CD4-positive, alpha-beta memory T cell (primary cell): ENCODE measurements at regions of chr3 and their contacts with region 1.

Region 1: DNA sequence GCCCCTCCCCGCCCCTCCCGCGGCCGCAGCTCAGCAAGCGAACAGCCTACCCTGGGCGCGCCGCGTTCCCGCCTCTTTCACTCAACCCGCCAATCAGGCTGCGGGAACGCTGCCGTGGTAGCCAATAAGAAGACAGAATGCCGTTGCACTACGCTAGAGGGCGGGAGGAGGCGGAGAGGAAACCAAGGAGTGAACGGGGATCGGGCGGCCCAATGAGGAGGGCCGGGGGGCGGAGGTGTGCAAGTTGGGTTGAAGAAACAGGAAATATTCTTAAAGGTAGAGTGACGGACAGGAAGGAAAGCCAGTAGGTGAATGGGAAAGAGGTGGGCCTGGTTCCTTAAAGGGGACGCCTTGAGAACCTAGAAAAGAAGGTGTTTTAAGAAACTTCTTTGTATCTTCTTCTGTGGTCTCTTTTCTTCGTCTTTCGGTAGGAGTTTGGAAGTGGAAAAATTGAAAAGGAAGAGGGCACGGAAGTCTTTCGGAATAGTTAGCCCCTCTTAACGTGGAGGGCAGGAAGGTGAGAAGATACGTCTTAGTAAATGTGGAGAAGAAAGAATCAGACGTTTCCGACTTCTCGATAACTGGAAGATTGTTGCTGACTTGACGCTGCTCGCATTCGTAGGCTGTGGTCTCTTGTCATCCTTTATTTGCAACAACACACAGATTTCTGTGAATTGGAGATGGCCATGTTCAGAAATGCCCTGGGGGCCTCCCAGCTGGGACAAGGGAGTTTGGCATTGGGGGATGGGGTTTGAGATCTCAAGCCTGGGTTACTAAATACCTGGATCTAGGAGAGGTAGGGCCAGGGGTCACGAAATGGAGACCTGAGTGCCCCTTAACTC is 437 bp upstream of the USF3 start:
- DNase-seq: peak; percentile 99 to 100 (median 100)
- H3K4me3 ChIP-seq: peak overlapping the region; percentile 74 to 90
- H3K4me3 Mint-ChIP-seq: no peak overlapping the region
- H3K27ac ChIP-seq: peak overlapping the region; percentile 86
- H3K27ac Mint-ChIP-seq: no peak overlapping the region
- H3K4me1 ChIP-seq: peaks cover 46% of the 10 kb centered on the region
- H3K4me1 Mint-ChIP-seq: peaks cover 20 to 33% (median 25%) of the 10 kb centered on the region in 4 donors
- H3K27me3 ChIP-seq: no peaks in the 10 kb centered on the region
- H3K27me3 Mint-ChIP-seq: no peaks in the 10 kb centered on the region

Region 2: GRCh38 chr3:113531826-113532697 is 164.8 kb before region 1 on chr3 and contains the start of gene SIDT1:
- CTCF ChIA-PET with region 1: no interaction called
- POLR2A ChIA-PET with region 1: no interaction called
- intact Hi-C with region 1: loop called (anchors 2 kb)
- DNase-seq: peak; percentile 77 to 84 (median 80)
- H3K4me3 ChIP-seq: peak within 1 kb of the TSS; percentile 79 to 96
- H3K4me3 Mint-ChIP-seq: peak within 1 kb of the TSS; percentile 97 to 100 (median 99)
- H3K27ac ChIP-seq: peak within 1 kb of the TSS; percentile 90
- H3K27ac Mint-ChIP-seq: peak within 1 kb of the TSS; percentile 95 to 100 (median 100)
- H3K4me1 ChIP-seq: peaks cover 45% of the 10 kb centered on the region
- H3K4me1 Mint-ChIP-seq: peaks cover 36 to 55% (median 45%) of the 10 kb centered on the region in 4 donors
- H3K27me3 ChIP-seq: no peaks in the 10 kb centered on the region
- H3K27me3 Mint-ChIP-seq: no peaks in the 10 kb centered on the region
- total RNA-seq, gene SIDT1: 55.0 to 56.1 TPM

Region 3: DNA sequence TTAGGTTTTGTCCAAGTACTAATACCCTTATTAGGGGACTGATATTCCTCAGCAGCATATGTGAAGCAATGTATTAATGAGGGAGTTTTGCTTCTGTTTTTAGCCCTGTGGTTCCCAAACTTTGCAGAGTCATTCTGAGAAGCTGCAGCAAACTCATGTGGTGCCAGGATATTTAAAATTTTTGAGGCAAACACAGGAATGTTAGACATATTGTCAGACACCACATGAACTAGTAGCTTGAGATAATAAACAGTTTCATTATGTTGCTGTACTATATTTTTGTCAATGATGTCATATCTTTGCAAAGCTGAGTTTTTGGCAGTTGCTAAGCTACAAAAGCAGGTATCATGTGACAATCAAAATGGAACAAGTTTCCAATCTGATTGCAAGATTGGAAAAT is 86.6 kb after region 1 on chr3:
- CTCF ChIA-PET with region 1: no interaction called
- POLR2A ChIA-PET with region 1: no interaction called
- intact Hi-C with region 1: no loop called
- DNase-seq: no peak
- H3K4me3 ChIP-seq: no peak overlapping the region
- H3K4me3 Mint-ChIP-seq: no peak overlapping the region
- H3K27ac ChIP-seq: no peak overlapping the region
- H3K27ac Mint-ChIP-seq: no peak overlapping the region
- H3K4me1 ChIP-seq: no peaks in the 10 kb centered on the region
- H3K4me1 Mint-ChIP-seq: peaks cover 0 to 6% (median 2%) of the 10 kb centered on the region in 4 donors
- H3K27me3 ChIP-seq: no peaks in the 10 kb centered on the region
- H3K27me3 Mint-ChIP-seq: no peaks in the 10 kb centered on the region

Region 4: GRCh38 chr3:113947372-113948014 is 250.6 kb after region 1 on chr3 and contains the start of gene ZDHHC23:
- CTCF ChIA-PET with region 1: no interaction called
- POLR2A ChIA-PET with region 1: no interaction called
- intact Hi-C with region 1: loop called (anchors 1 kb)
- DNase-seq: peak; percentile 71 to 79 (median 75)
- H3K4me3 ChIP-seq: peak within 1 kb of the TSS; percentile 57 to 66
- H3K4me3 Mint-ChIP-seq: peak within 1 kb of the TSS; percentile 86 to 90 (median 87)
- H3K27ac ChIP-seq: peak within 1 kb of the TSS; percentile 19
- H3K27ac Mint-ChIP-seq: peak within 1 kb of the TSS; percentile 78 to 87 (median 82)
- H3K4me1 ChIP-seq: peaks cover 14% of the 10 kb centered on the region
- H3K4me1 Mint-ChIP-seq: peaks cover 8 to 23% (median 11%) of the 10 kb centered on the region in 4 donors
- H3K27me3 ChIP-seq: no peaks in the 10 kb centered on the region
- H3K27me3 Mint-ChIP-seq: peaks cover 3 to 5% of the 10 kb centered on the region in 2 donors
- total RNA-seq, gene ZDHHC23: 5.2 to 7.3 TPM